ENCODE measurements at regions of chr2 and their contacts with region 1.

Region 1: GRCh38 chr2:42974721-42975717 is 182.6 kb upstream of the HAAO start:
- DNase-seq: peak; percentile 84 to 90
- H3K4me3 ChIP-seq: peak overlapping the region; percentile 42 to 49
- H3K27ac ChIP-seq: peak overlapping the region; percentile 68 to 73
- H3K4me1 ChIP-seq: peaks cover 0 to 19% (median 14%) of the 10 kb centered on the region in 4 donors
- H3K27me3 ChIP-seq: no peaks in the 10 kb centered on the region
- CTCF ChIP-seq: peak; percentile 92 to 97

Region 2: GRCh38 chr2:42474765-42475454 is 500.1 kb before region 1 on chr2:
- intact Hi-C with region 1: no loop called
- DNase-seq: no peak
- H3K4me3 ChIP-seq: no peak overlapping the region
- H3K27ac ChIP-seq: no peak overlapping the region
- H3K4me1 ChIP-seq: no peaks in the 10 kb centered on the region
- H3K27me3 ChIP-seq: no peaks in the 10 kb centered on the region
- CTCF ChIP-seq: no peak

Region 3: DNA sequence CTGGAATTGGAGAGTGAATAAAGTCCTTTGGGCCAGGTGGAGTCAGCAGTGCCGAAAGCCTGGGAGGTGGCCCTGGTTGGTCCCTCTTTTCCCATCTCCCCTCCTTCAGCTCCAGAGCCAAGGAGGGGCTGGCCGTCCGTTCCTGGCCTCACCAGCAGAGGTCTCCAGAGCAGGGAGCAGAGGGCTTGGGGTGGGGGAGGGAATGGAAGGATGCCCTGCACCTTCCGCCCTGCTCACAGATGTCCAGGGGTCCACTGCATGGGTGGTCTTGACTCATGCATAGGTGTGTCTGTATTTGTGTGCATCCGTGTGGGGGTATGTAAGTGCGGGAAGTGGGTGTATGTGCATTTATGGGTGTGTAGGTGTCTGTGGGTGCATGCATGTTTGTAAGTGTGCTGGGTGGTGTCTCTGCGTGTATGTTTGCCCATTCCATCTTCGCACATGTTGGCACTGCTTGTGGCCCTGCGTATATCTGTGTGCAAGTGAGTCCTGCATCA is 49.5 kb after region 1 on chr2:
- intact Hi-C with region 1: loop called (anchors 10 kb)
- DNase-seq: peak; percentile 48 to 77
- H3K4me3 ChIP-seq: no peak overlapping the region
- H3K27ac ChIP-seq: no peak overlapping the region
- H3K4me1 ChIP-seq: peaks cover 0 to 14% (median 4%) of the 10 kb centered on the region in 4 donors
- H3K27me3 ChIP-seq: no peaks in the 10 kb centered on the region
- CTCF ChIP-seq: peak; percentile 79 to 84

Region 4: DNA sequence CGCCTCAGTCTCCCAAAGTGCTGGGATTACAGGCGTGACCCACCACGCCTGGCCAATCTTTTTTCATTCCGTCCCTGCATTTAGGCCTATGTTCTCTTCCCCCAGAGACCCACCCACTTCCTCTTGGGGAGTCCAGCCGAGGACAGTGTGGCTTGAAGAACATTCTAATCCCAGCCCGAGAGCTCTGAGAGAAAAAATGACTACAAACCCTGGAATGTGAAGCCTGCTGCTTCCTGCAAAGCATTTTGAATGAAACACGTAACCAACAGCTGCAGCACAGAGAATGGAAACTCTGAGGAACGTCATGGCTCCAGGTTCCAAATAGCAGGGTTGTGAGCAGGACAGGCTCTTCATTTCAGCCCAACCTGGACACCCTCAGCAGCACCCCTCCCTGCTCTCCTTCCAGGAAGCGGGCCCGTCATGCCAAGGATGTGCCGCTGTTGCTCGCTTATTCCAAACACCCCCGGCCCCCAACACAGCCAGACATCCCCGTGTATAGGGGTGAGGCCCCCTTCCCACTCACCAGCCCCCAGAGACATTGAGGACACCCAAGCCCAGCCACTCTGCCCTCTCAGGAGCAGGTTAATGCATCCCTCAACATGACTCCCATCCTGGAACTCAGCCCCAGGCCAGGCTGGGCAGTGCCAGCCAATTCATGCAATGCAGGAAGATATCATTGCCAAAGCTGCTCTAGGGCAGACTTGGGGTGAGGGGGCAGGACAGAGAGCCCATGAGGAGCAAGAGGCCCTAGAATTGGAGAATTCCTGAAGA is 111.6 kb after region 1 on chr2:
- intact Hi-C with region 1: no loop called
- DNase-seq: peak; percentile 90 to 94
- H3K4me3 ChIP-seq: peak overlapping the region in 1 of 2 donors; percentile 10
- H3K27ac ChIP-seq: peak overlapping the region; percentile 82 to 85
- H3K4me1 ChIP-seq: peaks cover 3 to 63% (median 50%) of the 10 kb centered on the region in 4 donors
- H3K27me3 ChIP-seq: no peaks in the 10 kb centered on the region
- CTCF ChIP-seq: no peak

Region 5: GRCh38 chr2:43542285-43542937 is 567.4 kb after region 1 on chr2:
- intact Hi-C with region 1: loop called (anchors 5 kb)
- DNase-seq: no peak
- H3K4me3 ChIP-seq: no peak overlapping the region
- H3K27ac ChIP-seq: peak overlapping the region in 1 of 2 donors; percentile 82
- H3K4me1 ChIP-seq: peaks cover 0 to 45% (median 24%) of the 10 kb centered on the region in 4 donors
- H3K27me3 ChIP-seq: no peaks in the 10 kb centered on the region
- CTCF ChIP-seq: peak; percentile 55 to 72

Measured in tibial artery (tissue), 4 donors.